Activated CD8-positive, alpha-beta T cell treated with anti-CD3 and anti-CD28 coated beads, Interleukin-2, amount 10 ng/mL, durations not matched to agents 7 days and 5 days (primary cell): ENCODE measurements at regions of chr1 and their contacts with region 1.

Region 1: DNA sequence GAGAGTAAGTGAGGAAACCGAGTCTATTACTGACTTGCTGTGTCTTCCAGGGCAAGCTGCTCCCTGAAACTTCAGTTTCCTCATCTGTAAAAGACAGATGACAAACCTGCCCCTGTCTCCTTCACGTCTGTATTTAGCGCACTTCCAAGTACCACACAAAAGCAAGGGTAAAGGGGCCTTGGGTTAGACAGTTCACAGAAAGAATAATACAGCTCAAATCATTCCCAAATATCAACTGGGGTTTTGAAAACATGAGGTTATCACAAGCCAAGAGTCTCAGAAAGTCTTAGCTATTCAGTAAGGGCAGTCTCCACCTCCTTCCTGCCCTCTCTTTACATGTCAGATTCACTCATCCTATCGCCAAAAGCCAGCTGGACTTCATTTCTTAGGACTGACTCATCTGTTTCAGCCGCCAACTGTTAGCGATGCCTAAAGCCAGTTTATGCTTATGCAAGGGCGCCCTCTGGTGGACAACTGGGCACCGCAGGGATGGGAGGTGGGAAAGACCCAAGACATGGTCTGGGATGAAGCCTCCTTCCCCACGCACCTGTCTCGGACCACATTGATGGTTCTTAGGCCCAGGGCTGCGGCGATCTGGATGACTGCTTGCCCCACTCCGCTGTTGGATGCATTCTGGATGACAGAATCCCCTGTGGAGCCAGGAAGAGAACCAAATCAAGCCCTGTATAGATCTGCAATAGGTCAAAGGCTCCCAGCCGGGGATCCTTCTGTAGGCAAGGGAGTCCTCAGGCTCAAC is 21.1 kb upstream of the SRSF4 start:
- DNase-seq: peak; percentile 92
- ATAC-seq: peak; percentile 95
- H3K4me3 Mint-ChIP-seq: no peak overlapping the region
- H3K27ac Mint-ChIP-seq: peak overlapping the region; percentile 36
- H3K4me1 Mint-ChIP-seq: peaks cover 19% of the 10 kb centered on the region
- H3K27me3 Mint-ChIP-seq: no peaks in the 10 kb centered on the region

Region 2: DNA sequence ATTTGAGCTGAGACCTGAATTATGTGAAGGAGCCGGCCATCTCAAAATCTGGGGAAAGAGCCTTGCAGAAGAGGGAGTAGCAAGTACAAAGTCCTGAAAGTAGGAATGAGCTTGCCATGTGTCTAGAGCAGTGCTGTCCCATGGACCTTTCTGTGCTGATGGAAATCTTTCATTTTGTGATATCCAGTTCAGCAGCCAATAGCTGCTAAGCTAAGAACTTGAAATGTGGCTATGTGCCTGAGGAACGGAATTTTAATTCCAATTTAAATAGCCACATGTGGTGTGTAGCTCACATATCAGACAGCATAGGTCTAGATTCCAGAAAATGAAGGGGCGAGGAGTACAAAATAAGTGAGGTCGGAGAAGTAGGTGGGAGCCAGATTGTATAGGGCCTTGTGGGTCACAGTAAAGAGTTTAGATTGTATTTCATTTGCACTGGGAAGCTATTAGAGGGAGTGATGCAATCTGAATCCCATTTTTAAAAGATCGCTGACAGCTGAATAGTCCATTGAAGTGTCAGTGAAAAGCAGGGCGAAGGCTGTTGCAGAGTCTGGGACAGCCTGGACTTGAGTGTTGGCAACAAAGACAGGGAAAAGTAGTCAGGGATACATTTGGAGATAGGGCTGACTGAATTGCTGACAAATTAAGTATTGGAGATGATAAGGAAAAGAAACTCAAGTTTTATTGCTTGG is 159.3 kb before region 1 on chr1:
- CTCF ChIA-PET with region 1: interaction called, 10 read pairs
- POLR2A ChIA-PET with region 1: no interaction called
- DNase-seq: no peak
- ATAC-seq: no peak
- H3K4me3 Mint-ChIP-seq: no peak overlapping the region
- H3K27ac Mint-ChIP-seq: no peak overlapping the region
- H3K4me1 Mint-ChIP-seq: no peaks in the 10 kb centered on the region
- H3K27me3 Mint-ChIP-seq: no peaks in the 10 kb centered on the region

Region 3: GRCh38 chr1:29124366-29125236 is 78.2 kb before region 1 on chr1:
- CTCF ChIA-PET with region 1: interaction called, 24 read pairs
- POLR2A ChIA-PET with region 1: no interaction called
- DNase-seq: peak; percentile 74
- ATAC-seq: peak; percentile 66
- H3K4me3 Mint-ChIP-seq: peak overlapping the region; percentile 69
- H3K27ac Mint-ChIP-seq: no peak overlapping the region
- H3K4me1 Mint-ChIP-seq: peaks cover 10% of the 10 kb centered on the region
- H3K27me3 Mint-ChIP-seq: peaks cover 24% of the 10 kb centered on the region

Region 4: GRCh38 chr1:29171089-29171488 is 31.7 kb before region 1 on chr1:
- CTCF ChIA-PET with region 1: interaction called, 27 read pairs
- POLR2A ChIA-PET with region 1: no interaction called
- DNase-seq: no peak
- ATAC-seq: no peak
- H3K4me3 Mint-ChIP-seq: peak overlapping the region; percentile 52
- H3K27ac Mint-ChIP-seq: peak overlapping the region; percentile 71
- H3K4me1 Mint-ChIP-seq: peaks cover 64% of the 10 kb centered on the region
- H3K27me3 Mint-ChIP-seq: no peaks in the 10 kb centered on the region

Region 5: DNA sequence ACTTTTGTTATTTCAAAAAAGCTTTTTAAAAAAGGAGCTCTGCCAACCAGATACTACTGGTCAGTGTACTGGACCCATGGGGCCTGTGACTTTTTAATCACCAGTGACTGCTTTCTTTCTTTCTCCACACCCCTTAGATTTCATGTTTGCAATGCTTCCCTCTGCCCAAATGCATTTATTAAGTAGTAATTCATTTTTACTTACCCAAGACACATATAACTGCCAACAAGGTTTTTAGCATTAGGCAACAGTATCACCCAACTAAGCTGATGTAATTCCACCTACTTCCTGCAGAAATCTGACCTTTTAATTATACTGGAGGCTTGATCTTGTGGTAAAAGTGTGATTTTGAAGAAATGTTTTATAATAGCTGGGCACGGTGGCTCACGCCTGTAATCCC is 15.5 kb after region 1 on chr1:
- CTCF ChIA-PET with region 1: interaction called, 16 read pairs
- POLR2A ChIA-PET with region 1: no interaction called
- DNase-seq: no peak
- ATAC-seq: no peak
- H3K4me3 Mint-ChIP-seq: no peak overlapping the region
- H3K27ac Mint-ChIP-seq: no peak overlapping the region
- H3K4me1 Mint-ChIP-seq: no peaks in the 10 kb centered on the region
- H3K27me3 Mint-ChIP-seq: no peaks in the 10 kb centered on the region